WTC11 (cell line): ENCODE measurements at regions of chr19 and their contacts with region 1.

Region 1: GRCh38 chr19:48674921-48675824 is 2.4 kb upstream of the NTN5 start:
- DNase-seq: peak; percentile 91
- ATAC-seq: peak; percentile 85
- H3K4me3 Mint-ChIP-seq: no peak overlapping the region; the same call in 1 of the 2 replicates
- H3K27ac Mint-ChIP-seq: no peak overlapping the region
- H3K4me1 Mint-ChIP-seq: peaks cover 26% of the 10 kb centered on the region
- H3K27me3 Mint-ChIP-seq: peaks cover 17% of the 10 kb centered on the region
- CTCF ChIP-seq: peak; percentile 81

Region 2: DNA sequence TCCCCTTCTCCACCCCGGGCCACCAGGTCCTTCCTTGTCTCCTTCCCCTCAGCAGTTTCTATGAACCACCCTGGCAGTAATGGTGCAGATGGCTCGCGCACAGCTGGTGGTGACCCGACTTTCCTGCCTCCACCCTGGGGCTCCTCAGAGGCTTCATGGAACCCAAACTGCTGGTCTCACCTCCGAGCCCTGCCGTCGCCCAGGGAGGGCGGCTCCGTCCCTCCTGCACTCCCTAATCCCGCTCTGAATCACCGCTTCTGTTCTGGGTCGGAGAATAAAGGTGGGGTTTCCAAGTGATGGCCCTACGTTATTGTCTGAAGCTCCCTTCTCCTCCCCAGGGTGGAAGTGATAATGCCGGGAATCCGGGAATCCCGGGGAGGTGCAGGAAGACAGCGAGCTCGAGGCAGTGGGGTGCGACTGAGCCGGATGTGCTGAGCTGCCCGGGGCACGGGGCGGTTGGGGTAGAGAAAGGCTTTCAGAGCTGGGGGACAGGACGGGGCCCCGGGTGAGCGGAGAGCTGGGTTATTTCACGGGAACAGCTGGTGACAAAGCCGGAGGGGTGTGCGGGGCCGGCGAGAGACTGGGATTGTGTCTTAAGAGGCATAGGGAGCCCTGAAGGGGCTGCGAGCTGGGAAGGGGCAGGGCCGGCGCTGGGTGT is 21.3 kb after region 1 on chr19:
- CTCF ChIA-PET with region 1: interaction called, 23 read pairs
- POLR2A ChIA-PET with region 1: interaction called, 14 read pairs
- DNase-seq: peak; percentile 46
- ATAC-seq: peak; percentile 53
- H3K4me3 Mint-ChIP-seq: peak overlapping the region; percentile 97
- H3K27ac Mint-ChIP-seq: peak overlapping the region; percentile 79
- H3K4me1 Mint-ChIP-seq: peaks cover 4% of the 10 kb centered on the region
- H3K27me3 Mint-ChIP-seq: no peaks in the 10 kb centered on the region
- CTCF ChIP-seq: no peak